Activated B cell treated with CpG ODN at 0.5 μM for 24 hours (primary cell): ENCODE measurements at regions of chr3 and their contacts with region 1.

Region 1: DNA sequence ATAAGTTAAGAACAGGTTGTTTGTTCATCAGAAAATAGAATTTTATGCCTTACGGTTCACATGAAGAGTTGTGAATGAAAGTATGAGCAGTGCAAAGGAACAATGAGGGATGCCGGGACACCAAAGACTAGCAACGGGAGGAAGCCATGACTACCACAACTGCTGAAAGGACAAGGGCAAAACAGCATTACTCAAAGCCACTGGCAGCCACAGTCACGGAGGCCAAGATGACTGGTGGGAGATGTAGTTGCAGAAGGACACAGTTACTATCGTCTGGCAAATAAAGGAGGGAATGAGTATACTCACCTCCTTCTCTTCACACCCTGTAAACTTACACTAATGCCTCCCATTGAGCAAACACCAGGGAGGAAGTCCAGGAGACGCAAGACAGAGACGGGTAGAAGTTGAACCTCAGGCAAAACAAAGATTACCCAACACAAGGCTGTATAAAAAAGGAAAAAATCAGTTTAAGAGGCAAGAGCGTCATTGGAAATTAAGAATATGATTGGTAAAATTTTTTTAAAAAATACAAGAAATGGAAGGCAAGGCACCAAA is 675.5 kb downstream of the FHIT start:
- DNase-seq: no peak
- ATAC-seq: no peak
- H3K4me3 Mint-ChIP-seq: no peak overlapping the region
- H3K27ac Mint-ChIP-seq: no peak overlapping the region
- H3K4me1 Mint-ChIP-seq: peaks cover 14% of the 10 kb centered on the region
- H3K27me3 Mint-ChIP-seq: no peaks in the 10 kb centered on the region
- CTCF ChIP-seq: no peak

Region 2: GRCh38 chr3:60551455-60552209 is 24.2 kb before region 1 on chr3:
- CTCF ChIA-PET with region 1: no interaction called
- POLR2A ChIA-PET with region 1: no interaction called
- intact Hi-C with region 1: loop called (anchors 2 kb)
- DNase-seq: no peak
- ATAC-seq: no peak
- H3K4me3 Mint-ChIP-seq: no peak overlapping the region
- H3K27ac Mint-ChIP-seq: no peak overlapping the region
- H3K4me1 Mint-ChIP-seq: peaks cover 14% of the 10 kb centered on the region
- H3K27me3 Mint-ChIP-seq: no peaks in the 10 kb centered on the region
- CTCF ChIP-seq: no peak

Region 3: GRCh38 chr3:60585918-60586317 is 10.1 kb after region 1 on chr3:
- CTCF ChIA-PET with region 1: no interaction called
- POLR2A ChIA-PET with region 1: interaction called, 7 read pairs
- intact Hi-C with region 1: loop called (anchors 1 kb)
- DNase-seq: no peak
- ATAC-seq: peak; percentile 78
- H3K4me3 Mint-ChIP-seq: no peak overlapping the region
- H3K27ac Mint-ChIP-seq: peak overlapping the region; percentile 72
- H3K4me1 Mint-ChIP-seq: peaks cover 21% of the 10 kb centered on the region
- H3K27me3 Mint-ChIP-seq: no peaks in the 10 kb centered on the region
- CTCF ChIP-seq: no peak